Heart left ventricle (tissue), 16 donors: ENCODE measurements at regions of chr3 and their contacts with region 1.

Region 1: DNA sequence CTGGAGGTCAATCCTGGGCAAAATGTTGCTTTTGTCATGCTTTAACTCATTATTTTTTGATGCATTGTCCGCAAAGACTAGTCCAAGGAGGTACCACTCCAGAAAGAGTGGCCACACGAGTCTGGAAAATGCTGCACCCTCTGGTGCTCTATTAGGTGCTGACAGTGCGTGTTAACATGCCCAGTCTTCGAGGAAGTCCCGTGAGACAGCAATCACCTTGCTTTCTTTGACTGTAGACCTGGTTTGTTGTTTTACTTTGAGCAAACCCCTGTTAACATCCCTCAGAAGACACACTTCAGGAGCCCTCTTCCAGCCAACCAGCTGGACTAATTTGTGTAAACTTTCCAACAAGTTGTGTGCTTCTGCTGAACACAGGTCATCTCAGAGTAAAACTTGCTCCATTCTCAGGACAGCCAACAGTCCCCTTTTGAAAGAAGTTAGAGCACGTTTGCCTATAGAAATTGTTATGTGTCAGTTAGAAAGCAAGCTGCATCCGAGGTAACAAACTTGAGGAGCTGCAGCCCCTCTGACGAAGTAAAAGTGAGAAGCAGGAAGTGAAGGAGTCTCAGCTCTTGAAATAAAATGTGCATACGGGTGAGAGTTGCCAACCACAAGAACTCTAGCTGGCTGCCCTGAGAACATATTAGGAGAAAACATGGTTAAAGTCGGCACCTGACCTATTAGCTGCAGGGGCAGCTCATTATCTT is 205.0 kb downstream of the LPP start:
- DNase-seq: no peak
- ATAC-seq: peak in 1 of 4 donors; percentile 34
- H3K4me3 ChIP-seq: no peak overlapping the region
- H3K27ac ChIP-seq: peak overlapping the region in 3 of 12 donors; percentile 7 to 61 (median 11)
- H3K4me1 ChIP-seq: peaks cover 0 to 37% (median 17%) of the 10 kb centered on the region in 12 donors
- H3K27me3 ChIP-seq: no peaks in the 10 kb centered on the region
- CTCF ChIP-seq: no peak
- POLR2A ChIP-seq: no peak

Region 2: GRCh38 chr3:187722206-187722612 is 636.7 kb before region 1 on chr3:
- intact Hi-C with region 1: no loop called
- DNase-seq: no peak
- ATAC-seq: no peak
- H3K4me3 ChIP-seq: no peak overlapping the region
- H3K27ac ChIP-seq: no peak overlapping the region
- H3K4me1 ChIP-seq: peaks cover 0 to 7% (median 0%) of the 10 kb centered on the region in 12 donors
- H3K27me3 ChIP-seq: no peaks in the 10 kb centered on the region
- CTCF ChIP-seq: peak in 1 of 12 donors; percentile 6
- POLR2A ChIP-seq: no peak

Region 3: GRCh38 chr3:188446014-188446413 is 87.1 kb after region 1 on chr3:
- intact Hi-C with region 1: no loop called
- DNase-seq: no peak
- ATAC-seq: no peak
- H3K4me3 ChIP-seq: no peak overlapping the region
- H3K27ac ChIP-seq: no peak overlapping the region
- H3K4me1 ChIP-seq: peaks cover 0 to 9% (median 0%) of the 10 kb centered on the region in 12 donors
- H3K27me3 ChIP-seq: no peaks in the 10 kb centered on the region
- CTCF ChIP-seq: no peak
- POLR2A ChIP-seq: no peak

Region 4: GRCh38 chr3:188683032-188683521 is 324.1 kb after region 1 on chr3:
- intact Hi-C with region 1: loop called in 1 of 10 experiments (anchors 10 kb)
- DNase-seq: peak in 1 of 5 donors; percentile 51
- ATAC-seq: peak; percentile 80 to 93 (median 90)
- H3K4me3 ChIP-seq: no peak overlapping the region
- H3K27ac ChIP-seq: peak overlapping the region; percentile 17 to 77 (median 68)
- H3K4me1 ChIP-seq: peaks cover 0 to 85% (median 43%) of the 10 kb centered on the region in 12 donors
- H3K27me3 ChIP-seq: no peaks in the 10 kb centered on the region
- CTCF ChIP-seq: no peak
- POLR2A ChIP-seq: no peak